ENCODE measurements at regions of chr15 and their contacts with region 1.

Region 1: DNA sequence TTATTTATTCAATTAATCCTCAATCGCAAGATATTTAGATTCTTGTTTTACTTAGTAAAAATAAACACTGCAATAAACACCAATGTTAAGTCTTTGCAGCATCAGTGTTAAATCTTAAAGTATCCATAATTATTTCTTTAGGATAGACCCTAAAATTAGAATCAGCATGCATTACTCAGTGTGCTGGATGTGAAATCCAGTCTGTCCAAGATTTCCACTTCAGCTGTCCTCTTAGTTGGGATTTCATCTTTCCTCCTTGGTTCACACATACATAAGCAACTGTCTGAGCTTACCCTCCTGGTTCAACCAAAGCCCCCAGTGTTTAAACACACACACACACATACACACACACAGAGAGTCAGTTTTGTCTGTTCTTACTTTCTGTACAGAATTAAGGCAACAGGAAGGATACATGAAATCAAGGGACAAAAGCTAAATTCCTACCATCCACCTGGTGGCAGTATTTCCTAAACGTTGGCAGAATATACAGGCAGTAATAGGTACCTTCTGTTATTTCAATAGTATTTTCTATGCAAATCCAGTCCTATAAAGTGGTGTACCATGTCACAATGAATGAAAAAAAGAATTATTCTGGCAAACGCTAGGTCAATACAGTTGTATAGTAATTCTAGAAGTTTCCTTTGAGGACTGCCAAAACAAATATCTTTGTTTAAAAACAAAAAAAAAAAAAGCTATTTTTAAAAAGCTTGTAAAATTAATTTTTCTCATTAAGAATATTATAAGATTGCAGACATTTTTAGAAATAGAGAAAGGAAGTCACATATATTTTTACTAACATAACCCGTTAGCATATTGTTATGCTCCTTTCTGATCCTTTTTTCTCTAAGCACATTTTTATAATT is 27.3 kb upstream of the DMXL2 start:
- DNase-seq: no peak
- ATAC-seq: peak; percentile 75
- H3K4me3 ChIP-seq: no peak overlapping the region
- H3K27ac ChIP-seq: no peak overlapping the region
- H3K4me1 ChIP-seq: no peaks in the 10 kb centered on the region
- H3K27me3 ChIP-seq: no peaks in the 10 kb centered on the region

Region 2: DNA sequence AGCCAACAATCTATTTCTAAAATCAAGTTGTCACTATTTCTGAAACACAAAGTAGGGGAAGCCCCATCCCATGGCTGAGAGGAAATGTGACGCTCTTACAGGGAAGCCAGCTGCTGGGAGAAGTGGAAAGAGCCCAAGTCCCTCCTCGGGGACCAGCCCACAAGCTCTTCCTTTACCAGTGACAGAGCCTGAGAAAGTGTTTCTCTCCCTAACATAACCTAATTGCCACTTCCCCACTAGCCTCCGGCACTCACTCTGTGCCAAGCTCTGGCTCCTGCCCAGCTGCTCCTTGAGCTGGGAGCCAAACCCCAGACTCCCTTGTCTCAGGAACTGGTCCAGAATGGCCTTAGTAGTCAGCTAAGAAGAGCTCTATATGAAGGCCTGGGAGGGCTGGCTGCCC is 598.1 kb before region 1 on chr15:
- intact Hi-C with region 1: no loop called
- DNase-seq: peak; percentile 84 to 85
- ATAC-seq: peak; percentile 74
- H3K4me3 ChIP-seq: no peak overlapping the region
- H3K27ac ChIP-seq: no peak overlapping the region
- H3K4me1 ChIP-seq: peaks cover 0 to 7% of the 10 kb centered on the region in 2 donors
- H3K27me3 ChIP-seq: no peaks in the 10 kb centered on the region

Region 3: GRCh38 chr15:51776952-51777574 is 127.2 kb after region 1 on chr15:
- intact Hi-C with region 1: loop called (anchors 1 to 2 kb)
- DNase-seq: peak in 1 of 2 donors; percentile 57
- ATAC-seq: peak; percentile 91
- H3K4me3 ChIP-seq: no peak overlapping the region
- H3K27ac ChIP-seq: no peak overlapping the region
- H3K4me1 ChIP-seq: no peaks in the 10 kb centered on the region
- H3K27me3 ChIP-seq: no peaks in the 10 kb centered on the region

Region 4: GRCh38 chr15:52227456-52227855 is 577.6 kb after region 1 on chr15:
- intact Hi-C with region 1: loop called in 1 of 2 experiments (anchors 10 kb)
- DNase-seq: peak in 1 of 2 donors; percentile 76
- ATAC-seq: peak; percentile 86
- H3K4me3 ChIP-seq: no peak overlapping the region
- H3K27ac ChIP-seq: no peak overlapping the region
- H3K4me1 ChIP-seq: no peaks in the 10 kb centered on the region
- H3K27me3 ChIP-seq: no peaks in the 10 kb centered on the region

Measured in aorta (tissue), 5 donors.